ENCODE measurements at regions of chr5 and their contacts with region 1.

Region 1: GRCh38 chr5:102583276-102584124 is 84.7 kb upstream of the SLCO6A1 start:
- DNase-seq: no peak

Region 2: DNA sequence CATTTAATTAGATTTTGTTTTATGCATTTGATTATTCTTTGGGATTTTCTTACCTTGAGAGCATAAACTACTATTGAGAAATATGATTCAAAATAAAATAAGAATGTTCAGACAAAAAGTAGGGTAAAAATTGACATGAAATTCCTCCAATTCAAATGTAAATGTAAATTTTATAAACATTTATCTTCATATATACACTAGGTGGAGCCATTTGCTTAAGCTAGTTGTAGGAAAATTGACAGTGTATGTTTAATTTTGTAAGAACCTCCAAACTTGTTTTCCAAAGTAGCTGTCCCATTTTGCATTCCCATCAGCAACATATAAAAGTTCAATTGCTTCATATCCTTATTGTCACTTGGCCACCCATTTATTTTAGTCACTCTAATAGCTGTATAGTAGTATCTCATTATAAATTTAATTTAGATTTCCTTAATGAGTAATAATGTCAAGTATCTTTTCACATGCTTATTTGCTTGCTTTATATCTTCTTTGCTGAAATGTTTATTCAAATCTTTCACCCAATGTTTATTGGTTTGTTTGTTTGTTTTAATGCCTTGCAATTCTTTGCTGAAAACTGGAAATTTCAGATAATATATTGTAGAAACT is 47.1 kb before region 1 on chr5:
- intact Hi-C with region 1: no loop called
- DNase-seq: no peak

Region 3: GRCh38 chr5:102666164-102666946 is 82.9 kb after region 1 on chr5:
- intact Hi-C with region 1: loop called (anchors 5 kb)
- DNase-seq: no peak

Region 4: GRCh38 chr5:102778478-102778877 is 195.0 kb after region 1 on chr5:
- intact Hi-C with region 1: loop called (anchors 10 kb)
- DNase-seq: no peak

Region 5: DNA sequence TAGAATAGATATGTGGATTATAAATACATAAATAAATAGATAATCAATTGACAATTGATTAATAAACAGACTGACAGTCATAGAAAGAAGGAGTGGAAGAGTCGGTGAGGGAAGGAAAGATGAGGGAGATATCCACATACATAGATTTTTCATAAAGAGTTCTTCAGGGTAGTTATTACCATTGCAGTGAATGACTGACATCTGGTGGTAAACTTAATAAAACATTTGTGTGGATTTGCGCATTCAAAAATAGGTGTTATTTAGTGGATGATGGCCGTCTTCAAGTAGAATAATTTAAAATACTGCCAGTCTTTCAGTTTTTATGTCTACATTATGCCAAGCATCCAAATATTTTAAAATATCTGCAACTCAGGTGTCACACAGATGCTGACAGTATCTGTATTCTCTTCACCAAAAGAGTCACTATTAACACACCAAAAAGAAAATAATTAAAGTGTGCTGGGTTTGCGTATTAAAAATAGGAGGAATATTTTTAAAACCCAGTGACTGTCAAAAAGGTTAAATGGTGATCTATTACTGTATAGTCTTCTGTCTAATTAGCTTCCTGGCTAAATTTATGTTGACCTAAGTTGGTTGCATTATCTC is 457.7 kb after region 1 on chr5:
- intact Hi-C with region 1: loop called (anchors 2 kb)
- DNase-seq: no peak

Region 6: DNA sequence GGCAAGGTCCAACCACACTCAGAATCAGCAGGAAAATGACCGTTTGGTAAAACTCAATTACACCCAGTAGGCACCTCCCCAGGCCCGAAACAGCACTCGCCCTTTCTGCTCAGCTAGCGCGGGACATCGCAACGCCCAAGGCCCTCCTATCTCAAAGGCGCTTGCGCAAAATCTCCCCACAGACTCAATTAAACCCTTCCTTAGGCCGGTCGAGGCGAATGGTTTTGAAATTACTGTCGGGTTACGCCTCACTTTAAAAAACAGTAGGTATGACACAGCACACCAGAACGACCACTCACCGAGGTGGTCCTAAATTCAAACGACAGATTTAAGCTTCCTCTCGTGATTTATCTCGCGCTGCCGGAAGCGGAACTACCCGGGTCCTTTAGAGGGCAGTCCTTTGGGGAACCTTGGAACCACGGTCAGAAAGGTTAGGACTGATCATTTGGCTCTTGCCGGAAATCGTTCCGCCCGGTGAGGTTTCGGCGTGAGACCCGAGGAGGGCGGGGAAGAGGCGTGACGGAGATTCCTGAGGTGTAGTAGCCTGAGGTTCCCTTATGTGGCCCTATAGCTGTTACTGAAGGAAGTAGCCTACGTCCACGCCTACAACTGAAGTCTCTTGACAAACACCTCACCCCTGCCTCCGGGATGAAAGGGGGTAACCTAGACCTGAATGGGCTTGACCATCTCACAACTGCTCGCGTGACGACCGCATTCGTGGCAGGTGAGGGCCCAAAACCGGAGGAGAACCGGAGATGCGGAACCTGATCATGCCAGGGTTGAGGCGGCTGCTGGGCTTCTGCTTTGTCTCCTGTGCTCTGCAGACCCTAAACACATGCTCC is 536.5 kb after region 1 on chr5 and contains the starts of genes GIN1 and PPIP5K2:
- intact Hi-C with region 1: loop called (anchors 10 kb)
- DNase-seq: peak; percentile 99
- total RNA-seq, gene GIN1: 14.8 TPM
- total RNA-seq, gene PPIP5K2: 31.1 TPM

Region 7: GRCh38 chr5:103139264-103139865 is 555.9 kb after region 1 on chr5:
- intact Hi-C with region 1: loop called (anchors 5 kb)
- DNase-seq: peak; percentile 87

Measured in cardiac septum (tissue), 1 donor.